Activated T-helper 1 cell treated with anti-CD3 and anti-CD28 coated beads, Interleukin-12 subunit alpha, Interleukin-12 subunit beta, Interleukin-2, Interleukin-4 antibody, amounts not matched to agents 30 ng/mL and 10 ng/mL and 1 ng/mL, durations not matched to agents 14 hours and 24 hours and 36 hours (primary cell): ENCODE measurements at regions of chr1 and their contacts with region 1.

Region 1: DNA sequence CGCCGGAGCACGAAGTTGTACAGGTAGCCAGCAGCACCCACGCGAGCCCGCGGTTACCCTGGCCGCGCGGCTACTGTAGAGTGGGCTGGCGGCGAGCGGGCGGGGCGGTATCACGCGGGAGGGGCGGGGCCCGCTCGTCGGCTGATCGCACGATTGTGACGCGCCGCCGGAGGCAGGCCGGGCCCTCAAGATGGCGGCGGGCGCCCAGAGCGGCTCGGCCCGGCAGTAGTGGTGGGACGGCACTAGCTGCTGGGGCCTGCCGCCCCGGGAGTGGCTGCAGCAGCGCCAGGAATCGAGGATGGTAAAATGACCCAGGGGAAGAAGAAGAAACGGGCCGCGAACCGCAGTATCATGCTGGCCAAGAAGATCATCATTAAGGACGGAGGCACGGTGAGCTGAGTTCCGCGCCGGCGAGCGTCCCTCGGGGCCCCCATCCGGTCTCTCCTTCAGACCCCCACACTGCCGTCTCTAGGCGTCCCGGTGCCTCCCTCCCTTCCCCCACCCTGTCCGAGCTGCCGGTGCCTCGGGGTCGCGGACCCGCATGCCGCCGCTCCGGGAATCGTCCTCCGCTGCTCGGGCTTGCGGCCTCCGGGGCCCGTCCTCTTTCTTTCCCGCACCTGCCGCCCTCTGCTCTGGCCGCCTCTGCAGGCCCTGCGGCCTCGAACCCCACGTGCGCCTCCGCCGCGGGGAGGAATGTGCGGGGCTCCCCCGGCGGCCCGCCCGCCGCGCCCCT is 68.3 kb downstream of the SLC35A3 start:
- DNase-seq: peak; percentile 85
- H3K4me3 Mint-ChIP-seq: peak overlapping the region; percentile 97
- H3K27ac Mint-ChIP-seq: peak overlapping the region; percentile 98
- H3K4me1 Mint-ChIP-seq: peaks cover 60% of the 10 kb centered on the region
- H3K27me3 Mint-ChIP-seq: no peaks in the 10 kb centered on the region

Region 2: GRCh38 chr1:99849744-99850458 is 188.2 kb before region 1 on chr1 and contains the start of gene AGL:
- intact Hi-C with region 1: loop called (anchors 1 kb)
- DNase-seq: peak; percentile 80
- H3K4me3 Mint-ChIP-seq: peak within 1 kb of the TSS; percentile 92
- H3K27ac Mint-ChIP-seq: peak within 1 kb of the TSS; percentile 86
- H3K4me1 Mint-ChIP-seq: peaks cover 17% of the 10 kb centered on the region
- H3K27me3 Mint-ChIP-seq: peaks cover 6% of the 10 kb centered on the region
- total RNA-seq, gene AGL: 10.7 and 10.8 TPM in 2 replicates

Region 3: GRCh38 chr1:100065183-100065968 is 27.3 kb after region 1 on chr1:
- intact Hi-C with region 1: no loop called
- DNase-seq: no peak
- H3K4me3 Mint-ChIP-seq: no peak overlapping the region
- H3K27ac Mint-ChIP-seq: no peak overlapping the region
- H3K4me1 Mint-ChIP-seq: peaks cover 27% of the 10 kb centered on the region
- H3K27me3 Mint-ChIP-seq: no peaks in the 10 kb centered on the region

Region 4: DNA sequence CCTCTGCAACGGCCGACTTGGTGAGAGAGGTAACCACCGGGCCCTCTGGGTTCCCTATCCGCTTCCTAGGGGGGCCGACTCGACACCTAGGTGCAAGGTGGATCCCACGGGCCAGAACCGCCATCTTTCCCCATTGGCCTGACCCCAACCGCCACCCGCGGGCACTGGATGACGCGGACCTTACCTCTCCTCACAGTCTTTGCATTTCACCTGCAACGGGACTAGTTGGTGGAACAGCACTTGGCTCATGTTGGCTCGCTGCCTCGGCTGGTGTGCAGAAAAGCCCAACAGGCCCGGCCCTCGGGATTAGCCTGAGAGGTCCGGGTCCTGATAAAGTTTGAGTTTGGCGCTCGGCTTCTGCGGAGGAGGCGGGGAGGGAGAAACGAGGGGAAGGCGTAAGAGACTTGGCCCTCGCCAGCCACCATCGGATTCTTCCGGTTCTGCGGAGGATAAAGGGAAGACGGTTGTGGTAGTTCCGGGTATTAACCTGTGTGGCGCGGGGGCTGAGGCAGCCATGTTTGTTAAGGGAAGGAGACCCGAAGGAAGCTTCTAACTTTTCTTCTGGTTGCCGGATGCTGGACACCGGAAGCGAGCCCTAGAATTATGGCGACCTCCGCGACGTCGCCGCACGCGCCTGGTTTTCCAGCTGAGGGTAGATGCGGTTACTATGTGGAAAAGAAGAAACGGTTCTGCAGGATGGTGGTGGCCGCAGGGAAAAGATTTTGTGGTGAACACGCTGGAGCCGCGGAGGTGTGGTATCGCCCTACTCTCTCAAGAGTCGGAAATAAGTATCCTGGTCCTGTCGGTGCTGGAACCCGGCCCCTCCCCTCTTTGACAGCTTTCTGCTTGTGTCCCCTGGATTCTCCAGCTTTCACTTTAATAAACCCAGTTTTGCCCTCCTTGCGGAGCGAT is 94.7 kb after region 1 on chr1 and contains the starts of genes SASS6 and TRMT13:
- intact Hi-C with region 1: loop called (anchors 1 kb)
- DNase-seq: peak; percentile 93
- H3K4me3 Mint-ChIP-seq: peak within 1 kb of the TSS; percentile 99
- H3K27ac Mint-ChIP-seq: peak within 1 kb of the TSS; percentile 98
- H3K4me1 Mint-ChIP-seq: peaks cover 56% of the 10 kb centered on the region
- H3K27me3 Mint-ChIP-seq: no peaks in the 10 kb centered on the region
- total RNA-seq, gene SASS6: 16.4 and 16.7 TPM in 2 replicates
- total RNA-seq, gene TRMT13: 21.8 and 25.0 TPM in 2 replicates

Region 5: GRCh38 chr1:100351095-100351891 is 313.2 kb after region 1 on chr1:
- intact Hi-C with region 1: loop called (anchors 1 kb)
- DNase-seq: peak; percentile 85
- H3K4me3 Mint-ChIP-seq: peak overlapping the region; percentile 93
- H3K27ac Mint-ChIP-seq: peak overlapping the region; percentile 99
- H3K4me1 Mint-ChIP-seq: peaks cover 42% of the 10 kb centered on the region
- H3K27me3 Mint-ChIP-seq: peaks cover 2% of the 10 kb centered on the region

Region 6: DNA sequence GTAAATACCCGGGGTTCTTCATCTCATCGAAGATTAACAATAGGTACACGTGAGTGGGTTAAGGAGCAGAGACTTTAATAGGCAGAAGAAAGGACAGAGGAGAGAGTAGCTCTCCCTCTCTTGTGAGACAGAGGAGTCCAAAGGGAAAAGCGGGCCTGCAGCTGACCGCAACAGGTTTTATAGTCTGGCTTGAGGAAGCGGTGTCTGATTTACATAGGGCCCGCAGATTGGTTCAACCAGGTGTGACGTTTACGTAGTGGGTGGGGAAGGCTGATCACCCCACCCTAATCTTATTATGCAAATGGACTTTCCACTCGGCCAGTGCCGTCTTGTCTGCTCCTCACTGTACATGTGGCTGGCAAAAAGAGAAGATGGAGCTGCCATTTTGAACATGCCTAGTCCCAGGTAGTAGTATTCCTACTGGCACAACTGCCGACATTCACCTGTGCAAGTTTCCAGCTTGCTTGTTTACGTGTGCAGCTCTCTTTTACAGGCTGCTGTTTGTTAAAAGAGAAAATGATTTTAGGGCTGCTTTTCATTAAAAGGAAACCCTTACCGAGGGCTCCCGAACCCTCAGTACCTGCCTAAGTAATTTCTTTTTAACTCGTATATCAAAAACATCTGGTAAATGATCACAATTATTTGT is 324.9 kb after region 1 on chr1:
- intact Hi-C with region 1: no loop called
- DNase-seq: no peak
- H3K4me3 Mint-ChIP-seq: no peak overlapping the region
- H3K27ac Mint-ChIP-seq: no peak overlapping the region
- H3K4me1 Mint-ChIP-seq: peaks cover 43% of the 10 kb centered on the region
- H3K27me3 Mint-ChIP-seq: no peaks in the 10 kb centered on the region

Region 7: DNA sequence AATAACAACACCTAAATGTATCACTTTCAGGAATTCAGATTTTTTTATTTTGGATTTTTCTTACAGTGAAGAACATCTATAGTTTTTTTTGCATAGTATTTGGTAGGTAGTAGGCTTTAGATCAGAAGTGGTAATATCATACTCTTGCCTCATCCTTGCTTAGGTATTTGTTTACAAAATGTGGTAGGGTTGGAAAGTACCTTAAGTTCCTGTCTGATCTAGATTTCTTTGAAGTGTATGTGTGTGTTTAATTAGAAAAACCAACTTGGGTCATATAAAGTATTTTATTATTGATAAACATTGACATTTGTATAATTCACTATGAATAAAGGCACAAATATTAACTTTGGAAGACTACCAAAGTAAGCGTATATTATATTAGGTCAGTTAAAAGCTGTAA is 414.5 kb after region 1 on chr1:
- intact Hi-C with region 1: loop called (anchors 2 kb)
- DNase-seq: no peak
- H3K4me3 Mint-ChIP-seq: no peak overlapping the region
- H3K27ac Mint-ChIP-seq: peak overlapping the region; percentile 59
- H3K4me1 Mint-ChIP-seq: peaks cover 77% of the 10 kb centered on the region
- H3K27me3 Mint-ChIP-seq: no peaks in the 10 kb centered on the region

Region 8: GRCh38 chr1:100895540-100896483 is 857.7 kb after region 1 on chr1 and contains the start of gene SLC30A7:
- intact Hi-C with region 1: loop called (anchors 2 kb)
- DNase-seq: peak; percentile 95
- H3K4me3 Mint-ChIP-seq: peak within 1 kb of the TSS; percentile 93
- H3K27ac Mint-ChIP-seq: peak within 1 kb of the TSS; percentile 96
- H3K4me1 Mint-ChIP-seq: peaks cover 64% of the 10 kb centered on the region
- H3K27me3 Mint-ChIP-seq: no peaks in the 10 kb centered on the region
- total RNA-seq, gene SLC30A7: 42.6 and 51.2 TPM in 2 replicates